ENCODE measurements at regions of chr18 and their contacts with region 1.

Region 1: GRCh38 chr18:59885579-59886163 is 14.1 kb upstream of the PMAIP1 start:
- DNase-seq: peak; percentile 56
- ATAC-seq: peak; percentile 79
- H3K4me3 Mint-ChIP-seq: peak overlapping the region; percentile 26
- H3K27ac Mint-ChIP-seq: peak overlapping the region; percentile 74
- H3K4me1 Mint-ChIP-seq: peaks cover 39% of the 10 kb centered on the region
- H3K27me3 Mint-ChIP-seq: no peaks in the 10 kb centered on the region

Region 2: DNA sequence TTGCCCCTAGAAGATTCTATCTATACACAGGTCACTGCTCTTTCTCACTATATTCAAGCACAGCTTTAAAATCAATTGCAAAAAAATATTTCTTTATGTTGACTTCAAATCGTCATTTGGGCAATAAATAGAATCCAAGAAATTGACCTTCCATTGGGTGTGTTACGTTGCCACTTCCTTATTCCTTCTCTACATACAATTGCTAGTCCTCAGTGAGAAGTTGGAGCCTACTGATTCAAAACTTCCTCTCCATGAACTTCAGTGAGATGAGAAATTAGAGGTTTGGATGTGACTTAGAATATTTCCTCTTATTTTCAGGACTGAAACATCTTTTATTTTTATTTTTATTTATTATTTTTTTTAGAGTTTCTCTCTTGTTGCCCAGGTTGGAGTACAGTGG is 54.4 kb after region 1 on chr18:
- CTCF ChIA-PET with region 1: no interaction called
- POLR2A ChIA-PET with region 1: no interaction called
- intact Hi-C with region 1: no loop called
- DNase-seq: no peak
- ATAC-seq: no peak
- H3K4me3 Mint-ChIP-seq: no peak overlapping the region
- H3K27ac Mint-ChIP-seq: no peak overlapping the region
- H3K4me1 Mint-ChIP-seq: no peaks in the 10 kb centered on the region
- H3K27me3 Mint-ChIP-seq: no peaks in the 10 kb centered on the region

Region 3: DNA sequence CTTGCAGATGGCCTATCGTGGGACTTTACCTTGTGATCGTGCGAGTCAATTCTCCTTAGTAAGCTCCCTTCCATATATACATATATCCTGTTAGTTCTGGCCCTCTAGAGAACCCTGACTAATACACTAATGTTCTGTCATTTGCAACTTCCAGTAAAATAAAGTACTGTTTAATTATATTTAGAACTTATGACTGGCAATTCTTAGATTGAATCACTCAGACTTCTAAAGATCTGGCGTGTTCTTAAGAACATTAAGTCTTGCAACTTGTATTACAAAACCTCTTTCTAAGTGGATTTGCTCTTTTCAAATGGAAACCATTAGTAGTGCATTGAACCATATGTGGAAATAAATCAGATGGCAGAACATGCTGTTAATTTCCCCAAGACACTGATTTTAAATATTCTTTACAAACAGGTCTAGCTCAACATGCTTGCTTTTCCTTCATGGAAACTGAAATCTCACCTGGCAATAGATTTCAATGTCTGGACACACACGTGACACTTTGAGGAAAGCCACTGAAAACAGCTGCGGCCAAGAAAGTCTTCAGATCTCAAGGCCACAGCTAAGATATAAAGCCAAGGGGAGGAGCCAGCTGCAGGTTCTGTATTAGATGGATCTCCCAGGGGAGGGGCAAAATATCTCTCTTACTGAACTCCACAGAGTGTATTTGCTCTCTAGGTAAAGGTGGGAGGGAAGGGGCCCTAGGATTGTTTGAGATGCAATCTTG is 64.7 kb after region 1 on chr18:
- CTCF ChIA-PET with region 1: no interaction called
- POLR2A ChIA-PET with region 1: interaction called, 4 read pairs
- intact Hi-C with region 1: loop called in 1 of 2 experiments (anchors 1 kb)
- DNase-seq: peak; percentile 18
- ATAC-seq: peak; percentile 61
- H3K4me3 Mint-ChIP-seq: no peak overlapping the region
- H3K27ac Mint-ChIP-seq: no peak overlapping the region
- H3K4me1 Mint-ChIP-seq: peaks cover 38% of the 10 kb centered on the region
- H3K27me3 Mint-ChIP-seq: peaks cover 2% of the 10 kb centered on the region

Region 4: DNA sequence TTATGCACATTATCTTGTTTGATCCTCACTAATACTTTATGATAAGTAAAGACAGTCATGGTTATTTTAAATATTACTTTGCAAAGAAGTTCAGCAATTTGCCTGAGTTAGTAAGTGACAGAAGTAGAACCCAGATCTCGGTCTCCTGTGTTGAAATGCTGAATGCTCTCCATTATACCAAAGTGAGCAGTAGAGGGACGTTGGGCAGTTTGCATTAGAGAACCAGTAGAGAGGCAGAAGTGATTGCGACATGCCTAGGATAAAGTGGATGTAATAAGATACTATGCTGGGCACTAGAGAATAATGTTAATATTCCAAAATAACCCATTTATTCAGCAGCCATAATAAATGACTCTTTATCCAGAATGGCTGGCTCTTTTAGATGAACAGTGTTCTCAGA is 215.1 kb after region 1 on chr18:
- CTCF ChIA-PET with region 1: no interaction called
- POLR2A ChIA-PET with region 1: no interaction called
- intact Hi-C with region 1: no loop called
- DNase-seq: no peak
- ATAC-seq: no peak
- H3K4me3 Mint-ChIP-seq: no peak overlapping the region
- H3K27ac Mint-ChIP-seq: no peak overlapping the region
- H3K4me1 Mint-ChIP-seq: no peaks in the 10 kb centered on the region
- H3K27me3 Mint-ChIP-seq: no peaks in the 10 kb centered on the region

Measured in activated CD4-positive, alpha-beta T cell treated with anti-CD3 and anti-CD28 coated beads for 36 hours (primary cell).